Prostate gland (tissue), 2 donors: ENCODE measurements at regions of chr6 and their contacts with region 1.

Region 1: DNA sequence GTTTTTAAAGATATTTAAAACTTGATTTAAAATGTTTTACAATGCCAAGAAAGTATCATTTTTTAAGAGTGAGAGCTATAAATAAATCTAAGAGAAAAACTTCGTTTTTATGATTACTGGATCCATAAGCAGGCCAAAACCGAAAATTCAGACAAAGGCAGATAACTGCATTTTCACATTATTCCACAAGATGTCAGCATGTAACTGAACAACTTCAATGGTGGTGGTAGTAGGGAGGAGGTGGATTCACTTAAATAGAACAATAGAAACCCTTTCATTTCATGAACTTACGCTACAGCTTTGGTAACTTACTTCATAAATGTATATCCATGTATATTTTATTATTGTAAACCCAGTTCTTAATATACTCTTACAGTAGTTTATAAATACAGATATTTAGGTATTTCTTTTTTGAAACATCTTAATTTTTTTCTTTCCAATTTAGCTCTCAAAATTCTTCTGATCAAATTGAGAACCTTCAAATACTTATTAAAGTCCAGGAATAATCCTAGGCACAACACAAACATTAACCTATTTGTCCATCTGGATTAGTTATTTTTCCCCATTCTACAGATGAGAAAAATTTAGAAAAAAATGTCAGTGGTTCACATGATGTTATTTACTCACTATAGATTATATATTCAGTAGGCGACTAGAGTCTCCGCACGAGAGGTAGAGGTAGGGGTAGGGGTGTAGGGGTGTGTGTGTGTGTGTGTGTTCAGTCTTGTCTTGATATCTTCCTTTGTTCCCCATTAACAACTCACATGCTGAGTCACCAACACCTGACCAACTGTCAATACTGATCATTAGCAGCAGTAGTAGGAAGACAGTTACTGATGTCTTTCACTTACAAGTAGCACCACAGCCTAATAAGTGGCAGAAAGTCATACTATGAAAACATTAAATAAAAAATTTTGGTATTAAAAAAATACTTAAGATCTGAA is 111.5 kb downstream of the ARHGAP18 start:
- DNase-seq: peak; percentile 39
- H3K4me3 ChIP-seq: no peak overlapping the region
- H3K27ac ChIP-seq: no peak overlapping the region
- H3K4me1 ChIP-seq: no peaks in the 10 kb centered on the region
- H3K27me3 ChIP-seq: no peaks in the 10 kb centered on the region
- CTCF ChIP-seq: peak; percentile 41 to 90 (median 78)
- POLR2A ChIP-seq: no peak

Region 2: DNA sequence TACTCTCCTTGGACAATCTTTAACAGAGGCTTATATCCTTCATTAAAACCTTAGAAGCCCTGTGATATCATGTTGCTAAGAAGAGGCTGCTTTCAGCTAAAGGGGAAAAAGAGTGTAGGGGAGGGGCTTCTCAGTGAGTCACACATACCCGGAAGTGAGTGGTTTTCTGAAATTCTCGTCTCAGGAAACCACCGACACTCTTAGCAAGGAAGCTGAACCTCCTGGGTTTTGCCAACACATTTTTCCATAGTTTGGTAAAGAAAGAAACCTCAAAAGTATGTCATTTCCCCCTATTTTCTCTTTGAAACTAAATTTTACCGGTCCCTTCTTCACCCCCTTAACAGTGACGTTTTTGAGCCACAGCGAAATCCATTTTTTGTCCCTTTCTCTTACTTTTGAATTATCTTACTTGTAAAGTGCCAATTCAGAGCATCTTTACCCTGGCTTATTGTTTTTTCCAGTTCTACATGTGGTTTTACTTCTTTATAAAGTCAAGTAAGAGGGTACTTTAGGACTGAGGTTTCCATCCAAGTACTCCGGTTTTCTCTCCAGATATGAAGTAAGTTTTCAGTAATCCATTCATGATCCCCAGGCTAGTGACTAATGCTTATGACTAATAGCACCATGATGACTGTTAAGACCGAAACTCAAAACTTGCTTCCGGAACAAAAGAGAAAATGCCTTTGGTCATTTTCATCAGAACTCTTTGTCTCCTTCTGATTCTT is 107.8 kb before region 1 on chr6:
- intact Hi-C with region 1: no loop called
- DNase-seq: no peak
- H3K4me3 ChIP-seq: no peak overlapping the region
- H3K27ac ChIP-seq: peak overlapping the region; percentile 45 to 52
- H3K4me1 ChIP-seq: no peaks in the 10 kb centered on the region
- H3K27me3 ChIP-seq: no peaks in the 10 kb centered on the region
- CTCF ChIP-seq: no peak
- POLR2A ChIP-seq: no peak

Region 3: DNA sequence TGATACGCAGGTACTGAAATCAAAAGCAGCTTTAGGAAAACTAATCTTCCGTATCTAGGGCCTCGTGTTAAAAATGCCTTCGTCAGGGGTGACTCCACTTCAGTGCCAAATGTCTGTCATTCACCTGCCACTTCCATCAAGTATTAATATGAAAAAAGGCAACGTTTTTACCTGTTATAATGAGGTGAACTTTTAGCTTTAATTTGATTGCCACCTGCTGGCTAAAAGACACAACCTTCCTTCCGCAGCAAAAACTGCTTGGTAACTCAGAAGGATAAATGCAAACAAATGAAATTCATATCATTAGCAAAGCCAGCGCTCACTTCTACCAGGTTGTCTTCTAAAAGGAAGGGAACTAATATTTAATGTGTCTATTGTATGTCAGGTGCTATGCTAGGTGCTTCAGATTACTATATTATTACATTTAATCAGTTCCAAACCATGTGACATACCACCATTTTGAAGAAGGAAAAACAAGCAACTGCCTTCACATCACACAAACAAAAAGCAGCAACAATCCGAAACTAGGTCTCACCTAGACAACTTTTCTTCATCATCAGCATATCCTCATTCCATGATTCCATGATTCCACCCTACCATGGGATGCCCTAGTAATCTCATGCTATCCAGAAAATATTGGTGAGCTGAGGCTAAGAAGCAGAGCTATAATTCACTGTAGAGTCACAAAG is 132.1 kb after region 1 on chr6:
- intact Hi-C with region 1: loop called (anchors 2 kb)
- DNase-seq: peak; percentile 16
- H3K4me3 ChIP-seq: no peak overlapping the region
- H3K27ac ChIP-seq: no peak overlapping the region
- H3K4me1 ChIP-seq: no peaks in the 10 kb centered on the region
- H3K27me3 ChIP-seq: no peaks in the 10 kb centered on the region
- CTCF ChIP-seq: peak; percentile 35 to 83 (median 75)
- POLR2A ChIP-seq: no peak

Region 4: DNA sequence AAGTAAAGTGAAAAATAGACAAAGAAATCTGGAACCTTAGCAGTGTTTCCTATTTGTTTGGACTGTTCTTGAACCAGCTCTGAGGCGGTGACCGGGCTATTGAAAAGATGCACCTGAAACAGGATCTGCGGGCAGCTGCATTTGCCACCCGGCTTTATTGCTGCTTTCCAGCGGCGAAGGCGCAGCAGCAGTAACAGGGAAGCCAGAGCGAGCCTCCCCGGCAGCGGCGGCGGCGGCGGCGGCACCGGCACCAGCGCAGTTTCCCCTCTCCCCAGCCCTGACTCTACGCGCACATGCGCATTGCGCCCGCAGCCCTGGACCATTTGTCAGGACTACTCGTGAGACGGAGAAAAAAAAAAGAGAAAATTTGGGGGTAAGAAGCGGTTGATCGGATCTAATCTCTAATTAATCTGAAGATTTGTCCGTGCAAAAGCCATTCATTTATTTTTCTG is 419.8 kb after region 1 on chr6 and contains the start of gene L3MBTL3:
- intact Hi-C with region 1: loop called (anchors 5 kb)
- DNase-seq: peak; percentile 86
- H3K4me3 ChIP-seq: peak within 1 kb of the TSS; percentile 74 to 78
- H3K27ac ChIP-seq: peak within 1 kb of the TSS; percentile 79 to 85
- H3K4me1 ChIP-seq: no peaks in the 10 kb centered on the region
- H3K27me3 ChIP-seq: no peaks in the 10 kb centered on the region
- CTCF ChIP-seq: no peak
- POLR2A ChIP-seq: peak; percentile 21
- total RNA-seq, gene L3MBTL3: 7.7 to 25.0 TPM